GM10248 (cell line): ENCODE measurements at regions of chr11 and their contacts with region 1.

Region 1: DNA sequence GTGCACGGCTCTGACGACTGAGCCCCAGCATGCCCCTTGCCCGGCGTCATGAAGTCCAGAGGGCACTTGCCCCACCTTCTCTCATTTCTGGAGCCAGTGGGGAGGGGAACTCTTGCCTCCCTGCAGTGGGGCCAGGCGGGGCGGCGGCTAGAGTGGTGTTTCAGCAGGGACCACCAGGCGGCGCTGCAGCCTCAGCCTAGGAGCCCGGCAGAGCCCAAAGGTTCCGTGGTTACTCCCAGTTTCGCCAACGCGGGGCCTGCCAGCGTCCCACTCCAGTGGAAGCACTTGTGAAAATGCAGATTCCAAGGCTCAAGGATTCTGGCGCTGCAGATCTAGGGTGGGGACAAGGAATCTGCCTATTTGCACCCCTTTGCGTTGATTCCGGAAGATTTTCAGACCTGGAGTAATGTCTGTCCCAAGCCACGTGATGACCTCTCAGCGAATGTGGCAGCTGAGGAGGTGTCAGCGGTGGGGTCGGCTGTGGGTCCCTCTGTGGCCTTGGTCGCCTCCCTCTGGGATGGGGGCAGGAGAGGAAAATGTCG is 55.7 kb downstream of the CD82 start:
- DNase-seq: peak; percentile 74
- CTCF ChIP-seq: peak; percentile 89

Region 2: GRCh38 chr11:44565211-44565952 is 55.8 kb before region 1 on chr11 and contains the start of gene CD82:
- CTCF ChIA-PET with region 1: interaction called, 421 read pairs
- POLR2A ChIA-PET with region 1: no interaction called
- DNase-seq: peak; percentile 98
- CTCF ChIP-seq: no peak

Region 3: DNA sequence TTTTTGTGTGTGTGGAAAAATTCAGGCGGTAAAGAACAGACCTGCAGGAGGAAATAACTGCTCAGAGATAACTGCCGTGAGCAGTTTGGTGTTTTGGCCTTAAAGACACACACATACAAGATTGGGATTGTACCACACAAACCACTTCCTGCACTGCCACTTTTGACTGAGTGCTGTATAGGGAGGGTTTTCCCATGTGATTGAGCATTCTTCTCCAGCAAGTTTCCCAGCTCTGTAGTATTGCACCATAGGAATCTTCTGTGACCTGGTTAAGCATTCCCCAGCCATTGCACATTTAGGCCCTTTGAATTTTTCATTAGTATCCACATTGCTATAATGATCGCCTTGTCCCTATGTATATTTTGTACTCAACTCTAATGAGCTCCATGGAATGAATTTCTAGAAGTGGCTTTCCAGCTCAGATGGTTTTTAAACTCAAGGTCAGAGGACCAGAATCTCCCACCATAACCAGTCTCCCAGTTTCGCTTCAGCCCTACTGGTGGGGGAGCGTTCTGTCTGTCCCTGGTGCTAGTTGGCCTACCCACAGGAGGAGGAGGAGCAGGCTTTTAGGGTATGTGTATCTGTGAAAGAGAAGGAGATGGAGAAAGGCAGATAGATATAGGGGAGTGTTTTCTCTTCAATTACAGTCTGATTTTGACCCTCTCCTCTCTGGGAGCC is 46.5 kb before region 1 on chr11:
- CTCF ChIA-PET with region 1: interaction called, 12 read pairs
- POLR2A ChIA-PET with region 1: no interaction called
- DNase-seq: no peak
- CTCF ChIP-seq: no peak

Region 4: DNA sequence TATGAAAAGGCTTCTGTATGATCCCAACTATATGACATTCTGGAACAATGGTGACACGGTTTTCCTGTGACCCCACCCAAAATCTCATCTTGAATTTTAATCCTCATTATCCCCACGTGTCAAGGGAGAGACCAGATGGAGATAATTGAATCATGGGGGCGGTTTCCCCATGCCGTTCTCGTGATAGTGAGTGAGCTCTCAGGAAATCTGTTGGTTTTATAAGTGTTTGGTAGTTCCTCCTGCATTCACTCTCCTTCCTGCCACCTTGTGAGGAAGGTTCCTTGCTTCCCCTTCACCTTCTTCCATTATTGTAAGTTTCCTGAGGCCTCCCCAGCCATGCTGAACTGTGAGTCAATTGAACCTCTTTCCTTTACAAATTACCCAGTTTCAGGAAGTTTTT is 52.5 kb after region 1 on chr11:
- CTCF ChIA-PET with region 1: no interaction called
- POLR2A ChIA-PET with region 1: no interaction called
- DNase-seq: no peak
- CTCF ChIP-seq: no peak